Activated CD4-positive, alpha-beta T cell treated with anti-CD3 and anti-CD28 coated beads, Interleukin-2, amount 10 ng/mL, durations not matched to agents 24 days and 14 days (primary cell): ENCODE measurements at regions of chr5 and their contacts with region 1.

Region 1: DNA sequence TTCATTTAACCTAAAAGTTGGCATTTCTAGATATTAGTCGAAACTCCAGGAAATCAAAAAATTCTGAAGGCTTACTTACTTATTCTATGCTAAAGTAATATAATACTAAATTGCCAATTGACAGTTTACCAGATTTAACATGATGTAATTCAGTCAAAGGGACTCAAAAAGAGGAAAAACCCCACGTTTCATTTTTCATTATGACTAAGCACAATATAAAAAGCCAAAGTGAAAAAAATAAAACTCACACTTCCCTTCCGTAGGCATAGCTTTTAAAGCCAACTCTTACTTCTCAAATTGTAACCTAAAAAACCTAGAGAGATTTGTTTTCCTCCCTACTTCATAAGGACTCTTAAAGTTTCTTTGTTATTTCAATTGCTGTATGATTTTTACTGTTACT is 146.6 kb downstream of the RAPGEF6 start:
- DNase-seq: no peak
- H3K4me3 Mint-ChIP-seq: peak overlapping the region; percentile 32
- H3K27ac Mint-ChIP-seq: peak overlapping the region; percentile 53
- H3K4me1 Mint-ChIP-seq: peaks cover 18% of the 10 kb centered on the region
- H3K27me3 Mint-ChIP-seq: no peaks in the 10 kb centered on the region

Region 2: DNA sequence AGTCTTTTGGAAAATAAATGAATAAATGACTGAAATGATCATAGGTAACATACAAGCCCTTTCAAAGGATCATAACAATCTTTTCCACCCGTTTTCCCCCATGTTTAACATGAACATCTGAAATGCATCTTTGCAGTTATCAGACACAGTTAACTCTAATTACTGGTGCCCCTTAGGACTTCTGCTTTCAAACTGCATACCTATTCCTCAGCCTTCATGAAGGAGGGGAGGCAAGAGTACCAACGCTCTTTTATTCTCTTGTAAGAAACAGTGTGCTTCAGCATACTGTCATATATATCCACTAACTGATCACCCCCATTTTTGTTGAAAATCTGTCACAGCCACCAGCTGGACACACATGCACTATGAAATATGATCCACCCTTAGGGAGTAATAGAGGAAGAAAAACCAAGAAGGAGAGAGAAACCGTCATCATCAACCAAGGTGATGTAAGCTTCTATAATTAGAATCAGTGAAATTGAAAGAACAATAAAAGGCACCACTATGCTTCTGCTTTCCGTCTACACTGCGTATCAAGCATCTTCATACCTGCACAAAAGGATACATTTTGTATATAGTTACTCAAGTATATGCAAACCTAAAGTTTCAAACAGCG is 47.9 kb after region 1 on chr5:
- intact Hi-C with region 1: loop called (anchors 5 kb)
- DNase-seq: peak; percentile 72
- H3K4me3 Mint-ChIP-seq: peak overlapping the region; percentile 65
- H3K27ac Mint-ChIP-seq: peak overlapping the region; percentile 79
- H3K4me1 Mint-ChIP-seq: peaks cover 61% of the 10 kb centered on the region
- H3K27me3 Mint-ChIP-seq: no peaks in the 10 kb centered on the region

Region 3: GRCh38 chr5:131548176-131548575 is 59.7 kb after region 1 on chr5:
- intact Hi-C with region 1: loop called (anchors 5 kb)
- DNase-seq: peak; percentile 80
- H3K4me3 Mint-ChIP-seq: peak overlapping the region; percentile 87
- H3K27ac Mint-ChIP-seq: peak overlapping the region; percentile 92
- H3K4me1 Mint-ChIP-seq: peaks cover 62% of the 10 kb centered on the region
- H3K27me3 Mint-ChIP-seq: no peaks in the 10 kb centered on the region

Region 4: GRCh38 chr5:131735393-131735792 is 246.9 kb after region 1 on chr5:
- intact Hi-C with region 1: no loop called
- DNase-seq: no peak
- H3K4me3 Mint-ChIP-seq: no peak overlapping the region
- H3K27ac Mint-ChIP-seq: no peak overlapping the region
- H3K4me1 Mint-ChIP-seq: no peaks in the 10 kb centered on the region
- H3K27me3 Mint-ChIP-seq: no peaks in the 10 kb centered on the region